AG04449 (cell line): ENCODE measurements at regions of chr7 and their contacts with region 1.

Region 1: DNA sequence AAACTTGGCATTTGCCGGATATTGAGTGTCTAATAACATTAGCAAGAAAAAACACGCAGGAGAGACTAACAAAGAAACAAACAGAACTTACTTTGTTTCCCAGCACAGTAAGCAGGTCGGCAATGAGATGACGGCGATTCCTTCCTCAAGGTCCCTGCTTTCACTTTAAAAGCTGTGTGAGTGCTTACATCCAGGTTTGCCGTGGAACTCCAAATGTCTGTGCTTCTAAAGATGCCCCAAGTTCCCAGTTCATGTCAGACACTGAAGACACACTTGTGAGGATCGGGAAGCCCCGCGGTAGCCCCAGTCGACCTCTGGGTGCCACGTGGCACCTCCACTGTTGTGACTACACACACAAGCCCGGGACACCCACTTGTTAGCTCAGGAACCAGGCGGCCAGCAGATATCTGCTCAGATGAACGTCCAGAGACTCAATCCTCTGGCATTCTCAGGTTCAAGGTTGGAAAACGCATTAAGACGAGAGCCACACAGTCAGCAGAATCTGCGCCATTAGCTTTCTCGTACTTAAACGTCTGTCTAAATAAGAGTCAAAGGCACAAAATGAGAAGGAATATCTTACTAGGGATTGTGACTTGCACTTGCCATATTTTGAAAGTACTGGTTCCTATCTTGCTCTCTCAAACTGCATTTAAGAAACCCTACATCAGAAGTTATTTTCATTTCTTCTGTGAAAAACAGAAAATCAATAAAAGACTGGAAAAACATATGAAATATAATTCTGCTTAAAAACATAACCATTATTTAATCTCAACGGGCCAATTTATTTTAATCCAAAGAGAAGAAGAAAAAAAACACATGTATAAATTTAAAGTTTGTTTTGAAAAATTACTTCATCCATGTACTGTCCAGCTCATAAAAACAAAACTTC is 207.6 kb upstream of the KLF14 start:
- DNase-seq: no peak
- H3K4me3 ChIP-seq: peak overlapping the region; percentile 43
- CTCF ChIP-seq: no peak

Region 2: DNA sequence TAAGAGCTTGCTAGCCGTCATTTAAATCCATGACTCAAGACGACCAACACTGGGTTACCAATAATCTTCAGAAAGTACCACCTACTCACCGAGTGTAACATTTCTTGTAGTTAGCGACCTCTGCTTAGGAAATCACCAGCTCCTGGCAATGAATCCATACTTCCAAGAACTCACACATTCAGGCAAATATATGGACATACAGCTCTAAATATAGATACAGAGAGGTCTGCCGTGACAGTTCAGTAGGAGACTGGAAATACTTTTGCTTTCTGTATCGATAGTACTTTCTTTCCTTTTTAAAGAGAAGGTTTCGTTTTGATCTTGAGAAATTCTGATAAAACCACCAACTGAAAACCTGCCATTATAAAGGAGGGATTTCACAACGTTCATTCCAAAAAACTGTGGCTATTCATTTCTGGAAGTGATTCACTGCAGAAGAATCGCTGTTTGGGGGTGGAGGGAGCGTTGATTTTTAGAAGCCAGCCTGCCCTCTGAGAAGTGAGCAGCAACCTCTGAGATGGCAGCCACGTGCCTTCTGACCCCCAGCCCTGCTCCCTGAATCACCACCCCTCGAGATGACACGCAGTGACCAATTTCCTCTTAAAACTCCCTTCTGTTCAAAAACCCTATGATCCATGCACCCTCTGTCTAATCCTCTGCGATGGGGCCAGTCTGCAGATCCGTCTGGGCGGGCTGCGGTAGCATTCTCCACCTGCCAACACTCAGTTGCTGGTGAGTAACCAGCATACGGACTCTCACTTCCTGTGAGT is 28.5 kb before region 1 on chr7:
- CTCF ChIA-PET with region 1: interaction called, 5 read pairs
- POLR2A ChIA-PET with region 1: interaction called, 10 read pairs
- DNase-seq: peak; percentile 93
- H3K4me3 ChIP-seq: peak overlapping the region; percentile 86
- CTCF ChIP-seq: no peak

Region 3: GRCh38 chr7:130929896-130930659 is 11.5 kb before region 1 on chr7:
- CTCF ChIA-PET with region 1: interaction called, 17 read pairs
- POLR2A ChIA-PET with region 1: no interaction called
- DNase-seq: no peak
- H3K4me3 ChIP-seq: no peak overlapping the region
- CTCF ChIP-seq: no peak

Region 4: DNA sequence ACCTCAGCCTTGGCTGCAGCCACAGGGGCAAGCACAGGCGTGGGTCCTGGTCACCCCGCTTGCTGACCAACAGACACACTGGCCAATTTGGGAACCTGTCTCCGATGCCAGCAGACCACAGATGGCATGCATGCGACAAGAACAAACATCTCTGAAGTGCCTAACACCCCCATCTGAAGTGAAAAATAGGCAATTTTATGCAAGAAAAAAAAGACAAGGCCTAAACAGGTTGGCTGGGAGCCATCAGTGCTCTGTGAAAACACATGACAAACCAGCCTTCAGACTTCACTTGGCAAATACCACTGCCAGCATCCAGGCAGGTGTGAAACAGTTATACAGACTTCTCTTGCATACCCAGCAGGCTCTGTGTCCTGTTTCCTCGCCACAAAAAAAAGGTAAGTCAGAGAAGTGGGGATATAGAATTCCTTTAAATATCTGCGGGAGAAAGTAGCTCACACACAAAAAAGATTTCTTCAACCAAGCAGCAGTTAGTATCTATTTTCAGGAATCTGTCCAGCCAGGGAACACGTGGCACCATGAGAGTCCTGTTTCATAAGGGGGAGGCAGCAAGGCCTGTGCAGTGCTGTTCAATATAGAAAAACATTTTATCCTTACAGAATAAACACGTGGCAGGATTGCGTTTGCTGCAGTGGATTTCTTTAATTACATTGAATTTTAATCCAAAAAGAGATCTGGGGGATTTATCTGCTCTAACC is 92.8 kb after region 1 on chr7:
- CTCF ChIA-PET with region 1: no interaction called
- POLR2A ChIA-PET with region 1: no interaction called
- DNase-seq: no peak
- H3K4me3 ChIP-seq: no peak overlapping the region
- CTCF ChIP-seq: no peak